ENCODE measurements at regions of chr17 and their contacts with region 1.

Region 1: GRCh38 chr17:39730095-39730921 is at the start of gene MIEN1:
- DNase-seq: peak; percentile 93
- H3K4me3 Mint-ChIP-seq: peak within 1 kb of the TSS; percentile 91
- H3K27ac Mint-ChIP-seq: peak within 1 kb of the TSS; percentile 95
- H3K4me1 Mint-ChIP-seq: peaks cover 22% of the 10 kb centered on the region
- H3K27me3 Mint-ChIP-seq: no peaks in the 10 kb centered on the region
- total RNA-seq, gene MIEN1: 49.7 to 50.2 TPM

Region 2: GRCh38 chr17:39605492-39606433 is 124.5 kb before region 1 on chr17:
- CTCF ChIA-PET with region 1: no interaction called
- POLR2A ChIA-PET with region 1: no interaction called
- DNase-seq: no peak
- H3K4me3 Mint-ChIP-seq: no peak overlapping the region
- H3K27ac Mint-ChIP-seq: no peak overlapping the region
- H3K4me1 Mint-ChIP-seq: peaks cover 14% of the 10 kb centered on the region
- H3K27me3 Mint-ChIP-seq: peaks cover 76% of the 10 kb centered on the region

Region 3: DNA sequence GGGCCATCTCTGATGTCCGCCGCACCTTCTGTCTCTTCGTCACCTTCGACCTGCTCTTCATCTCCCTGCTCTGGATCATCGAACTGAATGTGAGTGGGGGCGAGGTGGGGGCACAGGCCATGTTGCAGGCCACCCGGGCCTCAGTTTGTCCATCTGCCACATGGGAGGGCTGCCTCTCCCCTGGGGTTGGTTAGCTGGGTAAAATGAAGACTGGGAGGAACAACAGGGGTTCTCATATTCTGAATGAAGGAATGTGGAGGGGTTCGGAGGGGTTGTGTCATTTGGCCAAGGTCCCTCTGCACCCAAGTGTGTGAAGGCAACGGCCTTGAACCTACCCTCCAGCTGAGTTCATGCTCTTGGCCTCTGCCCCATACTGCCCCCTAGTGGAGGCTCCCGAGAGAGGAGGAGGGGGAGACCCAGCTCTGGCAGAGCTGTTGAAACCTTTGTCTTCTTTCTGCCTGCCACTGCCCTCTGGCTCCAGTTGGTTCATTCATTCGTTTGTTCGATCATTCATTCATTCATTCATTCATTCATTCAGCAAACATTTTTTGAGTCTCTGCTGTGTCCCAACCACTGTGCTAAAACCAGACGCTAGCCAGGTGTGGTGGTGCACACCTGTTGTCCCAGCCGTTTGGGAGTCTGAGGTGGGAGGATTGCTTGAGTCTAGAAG is 76.5 kb before region 1 on chr17:
- CTCF ChIA-PET with region 1: interaction called, 10 read pairs
- POLR2A ChIA-PET with region 1: no interaction called
- DNase-seq: peak; percentile 86
- H3K4me3 Mint-ChIP-seq: no peak overlapping the region
- H3K27ac Mint-ChIP-seq: peak overlapping the region; percentile 46
- H3K4me1 Mint-ChIP-seq: peaks cover 30% of the 10 kb centered on the region
- H3K27me3 Mint-ChIP-seq: no peaks in the 10 kb centered on the region

Region 4: DNA sequence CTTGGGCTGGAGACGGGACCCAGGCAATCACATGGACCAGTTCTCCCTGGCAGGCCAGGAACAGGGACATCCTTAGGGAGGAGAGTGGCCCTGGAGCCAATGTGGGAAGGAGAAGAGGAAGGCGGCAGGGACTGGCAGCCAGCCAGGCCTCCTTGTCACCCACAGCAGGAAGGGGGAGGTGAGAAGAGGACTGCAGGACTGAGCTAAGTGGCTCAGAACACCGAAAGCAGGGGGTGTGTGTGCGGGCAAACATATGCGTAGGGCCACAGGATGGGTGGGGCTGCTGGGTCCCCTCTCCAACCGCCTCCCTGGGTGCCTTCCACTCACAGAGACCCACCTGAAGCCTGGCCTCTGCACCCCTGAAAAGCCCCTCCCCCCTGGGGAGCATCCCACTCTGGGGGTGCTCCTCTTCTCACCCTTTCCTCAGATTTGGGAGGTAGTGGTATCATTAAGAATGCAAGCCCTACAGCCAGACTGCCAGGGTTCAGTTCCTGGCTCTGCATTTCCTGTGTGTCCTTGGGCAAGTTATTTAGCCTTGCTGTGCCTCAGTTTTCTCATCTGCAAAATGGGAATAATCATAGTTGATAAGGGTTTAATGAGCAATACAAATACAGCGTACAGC is 54.0 kb before region 1 on chr17:
- CTCF ChIA-PET with region 1: interaction called, 17 read pairs
- POLR2A ChIA-PET with region 1: no interaction called
- DNase-seq: peak; percentile 70
- H3K4me3 Mint-ChIP-seq: no peak overlapping the region
- H3K27ac Mint-ChIP-seq: peak overlapping the region; percentile 86
- H3K4me1 Mint-ChIP-seq: peaks cover 61% of the 10 kb centered on the region
- H3K27me3 Mint-ChIP-seq: no peaks in the 10 kb centered on the region

Region 5: GRCh38 chr17:39687811-39688518 is 42.3 kb before region 1 on chr17 and contains the start of gene PGAP3:
- CTCF ChIA-PET with region 1: interaction called, 14 read pairs
- POLR2A ChIA-PET with region 1: interaction called, 3 read pairs
- DNase-seq: peak; percentile 83
- H3K4me3 Mint-ChIP-seq: peak within 1 kb of the TSS; percentile 94
- H3K27ac Mint-ChIP-seq: peak within 1 kb of the TSS; percentile 98
- H3K4me1 Mint-ChIP-seq: peaks cover 32% of the 10 kb centered on the region
- H3K27me3 Mint-ChIP-seq: no peaks in the 10 kb centered on the region
- total RNA-seq, gene PGAP3: 27.0 to 30.6 TPM

Region 6: DNA sequence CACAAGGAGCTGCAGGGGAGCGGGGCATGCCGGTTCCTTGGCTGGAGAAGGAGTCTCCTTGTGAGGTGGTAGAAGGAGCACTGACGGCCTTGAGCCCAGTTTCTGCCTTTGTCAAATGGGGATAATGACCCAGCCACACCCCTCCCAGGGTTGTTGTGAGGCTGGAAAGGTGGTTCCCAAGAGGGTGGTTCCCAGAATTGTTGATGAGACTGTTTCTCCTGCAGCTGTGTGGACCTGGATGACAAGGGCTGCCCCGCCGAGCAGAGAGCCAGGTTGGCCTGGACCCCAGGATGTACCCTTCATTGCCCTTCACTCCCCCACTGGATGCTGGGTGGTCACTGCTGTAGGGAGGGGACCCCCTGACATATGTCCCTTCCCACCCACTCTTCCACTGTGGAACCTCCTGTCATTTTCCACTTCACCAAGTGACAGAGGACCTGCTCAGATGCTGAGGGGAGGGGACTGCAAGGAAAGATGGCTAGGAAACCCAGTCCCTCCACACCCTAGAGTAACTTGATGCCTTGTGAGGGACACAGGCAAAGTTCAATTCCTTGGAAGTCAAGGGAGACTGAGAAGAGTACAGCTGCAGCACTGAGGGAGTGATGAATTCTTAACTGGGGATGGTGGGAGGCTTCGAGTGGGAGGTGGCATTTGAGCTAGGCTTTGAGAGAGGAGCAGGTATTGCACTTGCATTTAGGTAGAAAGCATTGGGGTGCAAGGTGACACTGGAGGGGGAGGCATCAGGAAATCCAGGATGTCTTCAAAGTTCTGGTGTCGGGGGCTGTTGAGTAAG is 10.5 kb before region 1 on chr17:
- CTCF ChIA-PET with region 1: interaction called, 18 read pairs
- POLR2A ChIA-PET with region 1: no interaction called
- DNase-seq: no peak
- H3K4me3 Mint-ChIP-seq: no peak overlapping the region
- H3K27ac Mint-ChIP-seq: no peak overlapping the region
- H3K4me1 Mint-ChIP-seq: no peaks in the 10 kb centered on the region
- H3K27me3 Mint-ChIP-seq: no peaks in the 10 kb centered on the region

Region 7: GRCh38 chr17:39754161-39754951 is 24.0 kb after region 1 on chr17:
- CTCF ChIA-PET with region 1: interaction called, 17 read pairs
- POLR2A ChIA-PET with region 1: no interaction called
- DNase-seq: peak; percentile 97
- H3K4me3 Mint-ChIP-seq: peak overlapping the region; percentile 75
- H3K27ac Mint-ChIP-seq: peak overlapping the region; percentile 94
- H3K4me1 Mint-ChIP-seq: peaks cover 60% of the 10 kb centered on the region
- H3K27me3 Mint-ChIP-seq: no peaks in the 10 kb centered on the region

Measured in activated CD4-positive, alpha-beta T cell treated with anti-CD3 and anti-CD28 coated beads, Interleukin-2, amount 10 ng/mL, durations not matched to agents 7 days and 5 days (primary cell).